ENCODE measurements at regions of chr4 and their contacts with region 1.

Region 1: DNA sequence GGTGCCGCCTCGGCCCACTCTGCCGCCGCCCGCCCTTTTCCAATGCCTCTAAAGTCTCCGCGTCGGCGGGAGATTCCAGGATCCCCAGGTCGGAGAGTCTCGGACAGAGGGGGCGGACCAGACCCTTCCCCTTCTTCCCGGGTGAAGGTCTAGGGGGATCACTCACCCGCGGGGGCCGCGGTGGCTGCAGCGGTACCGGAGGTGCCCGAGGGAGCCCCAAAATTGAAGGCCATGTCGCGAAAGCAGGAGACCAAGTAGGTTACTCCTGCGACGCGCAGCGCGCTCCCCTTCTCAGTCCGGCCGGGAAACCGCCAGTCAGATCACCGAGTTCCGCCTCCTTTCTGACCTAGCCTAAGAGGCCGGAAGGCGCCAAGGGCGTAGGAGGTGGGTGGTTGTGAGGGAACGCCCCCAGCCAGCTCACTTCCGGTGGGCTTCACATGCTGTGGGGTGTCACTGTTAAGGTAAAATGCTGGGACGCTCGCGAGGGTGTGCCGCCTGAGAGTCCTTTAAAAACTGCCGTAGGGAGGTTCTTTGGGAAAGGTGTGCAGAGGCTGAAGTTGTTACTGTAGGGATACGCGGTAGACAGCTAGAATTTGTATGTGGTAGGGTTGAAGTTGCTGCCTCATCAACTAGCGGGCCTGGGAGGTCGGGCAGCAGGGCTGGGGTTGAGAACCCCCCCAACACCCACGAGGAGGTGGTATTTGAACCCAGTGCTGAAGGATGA is at the start of gene NUP54:
- DNase-seq: peak; percentile 93
- ATAC-seq: peak; percentile 98
- H3K4me3 Mint-ChIP-seq: peak within 1 kb of the TSS; percentile 98
- H3K27ac Mint-ChIP-seq: peak within 1 kb of the TSS; percentile 94
- H3K4me1 Mint-ChIP-seq: peaks cover 33% of the 10 kb centered on the region
- H3K27me3 Mint-ChIP-seq: no peaks in the 10 kb centered on the region
- CTCF ChIP-seq: no peak
- total RNA-seq, gene NUP54: 48.1 and 58.9 TPM in 2 replicates

Region 2: GRCh38 chr4:75169427-75169826 is 978.9 kb before region 1 on chr4:
- CTCF ChIA-PET with region 1: no interaction called
- POLR2A ChIA-PET with region 1: no interaction called
- intact Hi-C with region 1: no loop called
- DNase-seq: no peak
- ATAC-seq: no peak
- H3K4me3 Mint-ChIP-seq: no peak overlapping the region
- H3K27ac Mint-ChIP-seq: no peak overlapping the region
- H3K4me1 Mint-ChIP-seq: peaks cover 25% of the 10 kb centered on the region
- H3K27me3 Mint-ChIP-seq: no peaks in the 10 kb centered on the region
- CTCF ChIP-seq: no peak

Region 3: DNA sequence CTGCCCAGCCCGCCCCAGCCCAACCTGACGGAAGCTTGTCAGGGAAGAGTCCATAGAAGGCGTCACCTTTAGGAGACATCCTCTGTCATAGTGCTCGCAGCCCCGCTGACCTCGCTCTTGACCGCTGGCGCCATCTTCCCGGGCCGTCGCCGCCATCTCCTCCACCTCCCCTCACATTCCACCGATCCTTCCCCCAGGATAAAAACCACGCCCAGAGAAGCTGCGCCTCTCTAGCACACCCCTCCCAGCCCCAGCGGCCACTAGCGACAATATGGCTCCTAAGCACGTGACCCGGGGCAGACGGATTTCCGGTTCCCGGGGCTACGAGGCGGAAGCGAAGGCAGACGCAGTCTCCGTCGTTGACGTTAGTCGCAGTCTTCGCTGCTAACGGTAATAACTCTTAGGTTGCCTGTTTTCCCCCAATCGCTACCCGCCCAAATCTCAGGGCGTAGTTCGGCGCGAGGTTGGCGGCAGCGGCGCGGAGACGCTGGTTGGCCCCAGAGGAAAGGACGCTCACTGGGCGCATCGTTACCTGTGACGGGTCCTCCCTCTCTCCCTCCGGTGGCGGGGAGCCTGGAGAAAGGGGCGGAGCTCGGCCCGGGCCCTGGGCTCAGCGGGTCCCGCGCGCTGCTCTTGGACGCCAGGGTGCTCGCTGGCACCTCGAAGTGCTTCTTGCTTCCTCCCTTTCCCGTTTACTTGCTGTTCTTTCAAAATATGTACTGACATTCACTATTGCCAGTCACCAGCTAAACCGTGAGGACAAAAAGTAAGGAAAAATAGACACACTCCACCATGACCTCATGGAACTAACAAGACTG is 634.0 kb before region 1 on chr4 and contains the starts of genes RCHY1 and THAP6:
- CTCF ChIA-PET with region 1: no interaction called
- POLR2A ChIA-PET with region 1: no interaction called
- intact Hi-C with region 1: loop called (anchors 1 kb)
- DNase-seq: peak; percentile 88
- ATAC-seq: peak; percentile 87
- H3K4me3 Mint-ChIP-seq: no peak within 1 kb of the TSS
- H3K27ac Mint-ChIP-seq: peak within 1 kb of the TSS; percentile 95
- H3K4me1 Mint-ChIP-seq: peaks cover 39% of the 10 kb centered on the region
- H3K27me3 Mint-ChIP-seq: no peaks in the 10 kb centered on the region
- CTCF ChIP-seq: no peak
- total RNA-seq, gene RCHY1: 28.5 and 29.6 TPM in 2 replicates
- total RNA-seq, gene THAP6: 17.4 and 24.6 TPM in 2 replicates

Region 4: DNA sequence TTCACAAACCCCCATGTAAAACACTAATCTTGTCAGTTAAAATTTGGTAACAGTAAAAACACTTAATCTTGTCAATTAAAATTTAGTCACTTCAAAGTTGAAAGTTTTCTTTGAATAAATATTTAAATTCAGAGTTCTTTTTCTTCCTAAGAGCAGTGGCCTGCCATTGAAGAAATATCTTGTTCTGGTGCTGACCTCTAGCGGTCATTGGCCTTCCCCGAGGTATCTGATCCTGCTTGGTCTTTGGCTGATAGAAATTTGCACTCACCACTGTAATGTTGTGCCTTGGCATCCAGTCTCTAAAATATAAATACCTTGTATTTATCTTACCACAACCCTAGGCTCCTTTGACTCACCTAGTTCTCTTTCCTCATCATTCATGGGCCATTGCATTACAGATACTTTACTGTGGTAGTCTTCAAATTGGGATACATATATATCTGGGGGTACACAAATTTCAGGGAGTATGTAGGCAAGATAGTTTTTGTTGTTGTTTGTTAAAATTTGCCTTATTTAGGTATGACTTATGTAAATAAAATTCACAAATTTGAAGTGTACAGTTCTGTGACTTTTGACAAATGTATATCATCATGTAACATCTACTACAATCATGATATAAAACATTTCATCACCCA is 80.5 kb before region 1 on chr4:
- CTCF ChIA-PET with region 1: no interaction called
- POLR2A ChIA-PET with region 1: interaction called, 3 read pairs
- intact Hi-C with region 1: loop called (anchors 5 kb)
- DNase-seq: peak; percentile 25
- ATAC-seq: peak; percentile 87
- H3K4me3 Mint-ChIP-seq: no peak overlapping the region
- H3K27ac Mint-ChIP-seq: no peak overlapping the region
- H3K4me1 Mint-ChIP-seq: peaks cover 3% of the 10 kb centered on the region
- H3K27me3 Mint-ChIP-seq: no peaks in the 10 kb centered on the region
- CTCF ChIP-seq: no peak

Region 5: DNA sequence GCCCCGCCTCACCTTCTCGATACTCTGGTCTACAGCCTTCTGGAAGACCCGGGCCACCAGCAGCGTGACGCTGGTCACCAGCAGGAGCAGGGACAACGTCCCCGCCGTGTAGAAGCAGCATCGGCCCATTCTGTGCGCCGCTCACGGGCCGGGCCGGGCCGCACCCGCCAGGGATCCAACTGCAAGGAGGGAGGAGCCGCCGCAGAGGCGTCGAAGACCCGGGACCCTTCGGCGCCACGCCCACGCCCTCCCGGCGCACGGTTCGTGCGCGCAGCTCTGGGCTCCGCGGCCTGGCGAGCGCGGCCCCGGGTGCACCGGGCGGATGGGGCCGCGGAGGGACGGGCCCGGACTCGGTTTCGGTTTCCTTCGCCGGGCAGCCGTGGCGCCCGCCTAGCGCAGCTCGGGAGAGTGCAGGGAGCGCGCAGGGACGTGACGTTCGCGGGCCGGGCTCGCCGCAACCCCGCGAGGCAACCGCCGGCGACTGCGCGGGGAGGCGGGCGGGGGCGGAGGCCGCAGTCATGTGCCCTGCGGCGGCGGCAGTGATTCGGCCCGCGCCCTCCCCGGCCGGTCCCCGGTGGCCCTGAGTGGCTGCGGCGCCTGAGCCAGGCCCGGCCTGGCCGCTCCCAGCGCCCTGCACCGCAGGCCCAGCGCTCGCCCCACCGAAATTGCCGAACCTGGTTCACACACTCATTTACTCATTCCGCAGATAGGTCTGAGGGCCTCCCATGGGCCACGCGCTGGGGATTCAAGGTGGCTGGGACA is 65.3 kb after region 1 on chr4 and contains the start of gene SCARB2:
- CTCF ChIA-PET with region 1: no interaction called
- POLR2A ChIA-PET with region 1: interaction called, 4 read pairs
- intact Hi-C with region 1: loop called (anchors 1 kb)
- DNase-seq: peak; percentile 83
- ATAC-seq: peak; percentile 80
- H3K4me3 Mint-ChIP-seq: peak within 1 kb of the TSS; percentile 91
- H3K27ac Mint-ChIP-seq: peak within 1 kb of the TSS; percentile 90
- H3K4me1 Mint-ChIP-seq: peaks cover 51% of the 10 kb centered on the region
- H3K27me3 Mint-ChIP-seq: no peaks in the 10 kb centered on the region
- CTCF ChIP-seq: no peak
- total RNA-seq, gene SCARB2: 17.2 and 21.8 TPM in 2 replicates

Region 6: GRCh38 chr4:77862478-77863216 is 1714.3 kb after region 1 on chr4 and contains the start of gene MRPL1:
- CTCF ChIA-PET with region 1: no interaction called
- POLR2A ChIA-PET with region 1: no interaction called
- intact Hi-C with region 1: loop called (anchors 1 kb)
- DNase-seq: peak; percentile 72
- ATAC-seq: peak; percentile 86
- H3K4me3 Mint-ChIP-seq: peak within 1 kb of the TSS; percentile 97
- H3K27ac Mint-ChIP-seq: peak within 1 kb of the TSS; percentile 100
- H3K4me1 Mint-ChIP-seq: peaks cover 47% of the 10 kb centered on the region
- H3K27me3 Mint-ChIP-seq: no peaks in the 10 kb centered on the region
- CTCF ChIP-seq: no peak
- total RNA-seq, gene MRPL1: 31.7 and 38.3 TPM in 2 replicates